A549 (cell line): ENCODE measurements at regions of chr17 and their contacts with region 1.

Region 1: DNA sequence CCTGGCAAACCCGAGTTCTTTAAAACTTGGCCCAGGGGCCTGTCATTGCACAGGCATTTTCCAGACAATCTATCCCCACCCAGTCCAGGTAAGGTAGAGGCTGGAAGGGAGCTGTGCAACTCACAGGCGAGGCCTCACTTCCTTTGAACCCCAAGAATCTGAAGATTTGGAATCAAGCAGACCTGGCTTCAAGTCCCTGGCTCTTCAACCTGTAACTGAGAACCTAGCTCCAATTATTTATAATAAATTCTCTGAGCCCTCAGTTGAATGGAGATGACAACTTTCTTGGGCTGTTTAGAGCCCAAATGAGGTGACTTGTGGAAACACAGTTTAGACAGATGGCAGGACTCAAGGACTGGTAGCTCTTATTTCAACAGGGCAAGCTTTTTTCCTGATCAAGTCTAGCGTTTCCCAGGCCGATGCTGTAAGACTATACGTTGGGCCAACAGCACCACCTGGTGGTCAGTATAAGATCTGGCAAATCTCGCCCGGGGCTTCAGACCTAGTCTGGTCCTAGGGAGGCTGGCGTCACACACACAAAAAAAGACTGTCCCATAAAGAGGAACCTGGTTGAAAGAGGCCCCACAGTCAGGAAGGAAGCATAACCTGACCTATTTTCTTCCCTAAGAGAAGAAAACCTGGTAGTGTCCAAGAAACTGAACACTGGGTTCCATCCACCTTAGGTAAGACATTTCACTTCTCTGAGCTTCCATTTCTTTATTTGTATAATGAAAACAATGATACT is 117.9 kb downstream of the C17orf67 start:
- DNase-seq: peak; percentile 84 to 88
- ATAC-seq: peak; percentile 94 to 99
- H3K4me3 ChIP-seq: no peak overlapping the region
- H3K27ac ChIP-seq: no peak overlapping the region
- H3K4me1 ChIP-seq: no peaks in the 10 kb centered on the region
- CTCF ChIP-seq: peak; percentile 93
- EP300 ChIP-seq: no peak
- POLR2A ChIP-seq: no peak
- RAD21 ChIP-seq: peak; percentile 97

Region 2: DNA sequence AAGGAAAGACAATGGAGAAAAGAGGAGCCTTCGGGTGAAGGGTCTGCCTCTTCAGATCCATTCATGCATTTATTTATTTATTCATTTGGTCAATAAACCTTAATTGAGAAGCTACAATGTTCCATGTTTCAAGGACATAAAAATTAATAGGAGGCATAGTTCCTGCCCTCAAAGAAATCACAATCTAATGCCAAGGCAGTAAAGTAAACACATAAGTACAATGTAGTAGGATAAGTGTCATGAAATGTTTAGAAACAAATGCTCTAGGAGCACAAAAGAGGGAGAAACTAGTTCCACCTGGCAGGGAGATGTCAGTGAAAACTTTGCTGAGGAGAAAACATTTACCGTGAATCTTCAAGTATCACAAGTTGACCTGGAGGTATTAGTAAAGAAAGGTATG is 225.8 kb before region 1 on chr17:
- CTCF ChIA-PET with region 1: interaction called, 11 read pairs
- POLR2A ChIA-PET with region 1: no interaction called
- DNase-seq: no peak
- ATAC-seq: no peak
- H3K4me3 ChIP-seq: no peak overlapping the region
- H3K27ac ChIP-seq: no peak overlapping the region
- H3K4me1 ChIP-seq: no peaks in the 10 kb centered on the region
- CTCF ChIP-seq: no peak
- EP300 ChIP-seq: no peak
- POLR2A ChIP-seq: no peak
- RAD21 ChIP-seq: no peak

Region 3: DNA sequence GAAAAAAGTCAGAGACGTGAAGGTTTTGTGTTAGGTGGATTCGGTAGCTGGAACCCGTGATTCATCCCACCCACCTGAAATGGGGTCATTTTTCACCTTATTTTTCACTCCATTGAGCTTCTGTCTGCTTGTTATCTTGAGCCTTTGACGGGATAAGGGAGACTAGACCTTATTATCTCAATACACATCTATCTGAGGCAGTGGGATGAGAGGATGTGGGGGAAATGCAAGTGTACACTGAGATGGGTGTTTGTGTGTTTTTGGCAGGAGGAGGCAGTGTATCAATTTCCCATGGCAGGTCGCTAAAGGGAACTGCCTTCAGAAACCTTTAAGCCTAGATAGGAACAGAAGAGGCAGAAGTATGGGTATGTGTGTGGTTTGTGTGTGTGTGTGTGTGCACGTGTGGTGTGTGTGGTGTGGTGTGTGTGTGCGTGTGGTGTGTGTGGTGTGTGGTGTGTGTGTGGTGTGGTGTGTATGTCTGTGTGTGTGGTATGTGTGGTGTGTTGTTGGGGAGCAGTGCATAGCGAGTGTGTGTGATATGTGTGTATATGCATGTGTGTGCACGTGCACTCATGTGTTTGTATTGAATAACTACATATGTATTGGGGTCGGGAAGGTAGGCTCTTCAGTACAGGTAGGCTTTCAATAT is 128.4 kb before region 1 on chr17:
- CTCF ChIA-PET with region 1: interaction called, 400 read pairs
- POLR2A ChIA-PET with region 1: no interaction called
- DNase-seq: no peak
- ATAC-seq: no peak
- H3K4me3 ChIP-seq: no peak overlapping the region
- H3K27ac ChIP-seq: no peak overlapping the region
- H3K4me1 ChIP-seq: no peaks in the 10 kb centered on the region
- CTCF ChIP-seq: no peak
- EP300 ChIP-seq: no peak
- POLR2A ChIP-seq: no peak
- RAD21 ChIP-seq: no peak

Region 4: GRCh38 chr17:56629531-56630075 is 86.2 kb before region 1 on chr17:
- CTCF ChIA-PET with region 1: interaction called, 17 read pairs
- POLR2A ChIA-PET with region 1: no interaction called
- DNase-seq: peak; percentile 45 to 77
- ATAC-seq: peak; percentile 98 to 99
- H3K4me3 ChIP-seq: no peak overlapping the region
- H3K27ac ChIP-seq: no peak overlapping the region
- H3K4me1 ChIP-seq: peaks cover 5% of the 10 kb centered on the region
- CTCF ChIP-seq: peak; percentile 29; the same call in 2 of the 3 replicates
- EP300 ChIP-seq: no peak
- POLR2A ChIP-seq: no peak
- RAD21 ChIP-seq: peak in 1 of 2 experiments; percentile 16; a peak in 1 of 5 replicates

Region 5: GRCh38 chr17:56679115-56679766 is 36.5 kb before region 1 on chr17:
- CTCF ChIA-PET with region 1: interaction called, 67 read pairs
- POLR2A ChIA-PET with region 1: no interaction called
- DNase-seq: peak; percentile 23 to 66
- ATAC-seq: peak in 1 of 2 experiments; percentile 85; a peak in 3 of 6 replicates
- H3K4me3 ChIP-seq: no peak overlapping the region
- H3K27ac ChIP-seq: no peak overlapping the region
- H3K4me1 ChIP-seq: peaks cover 5% of the 10 kb centered on the region; the same call in 1 of the 3 replicates
- CTCF ChIP-seq: peak; percentile 66
- EP300 ChIP-seq: no peak
- POLR2A ChIP-seq: no peak
- RAD21 ChIP-seq: peak; percentile 54 to 61

Region 6: DNA sequence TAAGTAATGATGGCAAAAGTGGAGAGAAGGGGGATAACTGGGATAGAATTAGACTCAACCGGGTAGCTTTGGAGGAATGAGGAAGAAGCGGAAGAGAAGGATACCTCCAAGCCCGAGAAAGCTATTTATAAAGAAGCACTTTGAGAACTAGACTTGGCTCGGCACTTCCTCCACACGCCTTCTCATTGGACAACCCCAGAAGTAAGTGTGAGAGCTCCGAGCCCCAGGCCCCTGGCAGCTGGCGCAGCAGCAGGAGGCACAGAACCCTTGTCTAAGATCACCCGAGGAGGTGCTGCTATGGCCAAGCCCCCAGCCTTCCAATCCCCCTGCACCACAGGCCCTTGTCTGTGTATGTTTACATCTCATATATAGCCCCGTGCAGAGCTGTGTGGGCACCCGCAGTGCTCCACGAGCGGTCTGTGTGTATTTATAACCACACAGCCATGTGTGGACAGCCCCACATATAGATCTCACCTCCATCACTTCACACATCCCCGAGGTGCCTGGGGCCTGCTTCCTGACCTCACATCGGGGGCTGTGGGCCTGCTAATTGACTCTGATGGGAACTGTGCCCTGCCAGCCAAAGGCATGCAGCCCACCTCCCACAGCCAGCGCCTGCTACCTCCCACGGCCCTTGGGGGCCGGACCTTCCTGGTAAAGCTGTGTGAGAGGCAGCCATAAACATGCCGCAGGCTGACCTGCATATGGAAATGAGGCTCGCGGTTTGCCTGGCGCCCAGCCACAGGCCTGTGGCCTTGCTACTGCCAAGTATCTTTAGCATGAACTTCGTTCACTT is 21.8 kb after region 1 on chr17:
- CTCF ChIA-PET with region 1: interaction called, 15 read pairs
- POLR2A ChIA-PET with region 1: no interaction called
- DNase-seq: no peak
- ATAC-seq: no peak
- H3K4me3 ChIP-seq: no peak overlapping the region
- H3K27ac ChIP-seq: no peak overlapping the region
- H3K4me1 ChIP-seq: no peaks in the 10 kb centered on the region
- CTCF ChIP-seq: no peak
- EP300 ChIP-seq: no peak
- POLR2A ChIP-seq: no peak
- RAD21 ChIP-seq: no peak

Region 7: DNA sequence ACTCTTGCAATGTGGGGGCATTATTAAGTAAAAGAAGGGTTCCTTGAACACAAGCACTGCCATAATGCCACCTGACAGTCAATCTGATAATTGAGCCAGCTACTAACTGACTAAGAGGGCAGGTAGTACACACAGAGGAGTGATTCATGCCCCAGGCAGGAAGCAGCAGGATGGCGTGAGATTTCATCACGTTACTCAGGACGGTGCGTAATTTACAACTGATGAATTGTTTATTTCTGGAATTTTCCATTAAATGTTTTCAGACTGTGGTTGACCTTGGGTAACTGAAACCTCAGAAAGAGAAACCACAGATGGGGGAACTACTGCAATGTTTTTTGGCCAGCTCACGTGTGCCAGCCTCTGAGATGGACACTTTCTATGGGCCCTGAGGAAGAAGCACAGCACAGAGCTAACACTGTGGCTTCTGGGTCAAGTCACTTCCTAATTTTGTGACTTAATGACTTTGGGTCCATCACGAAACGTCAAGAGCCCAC is 71.3 kb after region 1 on chr17:
- CTCF ChIA-PET with region 1: interaction called, 44 read pairs
- POLR2A ChIA-PET with region 1: no interaction called
- DNase-seq: peak; percentile 27 to 70
- ATAC-seq: peak; percentile 87 to 94
- H3K4me3 ChIP-seq: no peak overlapping the region
- H3K27ac ChIP-seq: peak overlapping the region; percentile 70 to 72
- H3K4me1 ChIP-seq: peaks cover 27% of the 10 kb centered on the region
- CTCF ChIP-seq: no peak
- EP300 ChIP-seq: peak in 1 of 2 experiments; percentile 32; a peak in 2 of 5 replicates
- POLR2A ChIP-seq: no peak
- RAD21 ChIP-seq: no peak

Region 8: GRCh38 chr17:56887550-56888467 is 172.0 kb after region 1 on chr17:
- CTCF ChIA-PET with region 1: no interaction called
- POLR2A ChIA-PET with region 1: no interaction called
- DNase-seq: no peak
- ATAC-seq: no peak
- H3K4me3 ChIP-seq: no peak overlapping the region
- H3K27ac ChIP-seq: no peak overlapping the region
- H3K4me1 ChIP-seq: no peaks in the 10 kb centered on the region
- CTCF ChIP-seq: no peak
- EP300 ChIP-seq: no peak
- POLR2A ChIP-seq: no peak
- RAD21 ChIP-seq: no peak